ENCODE measurements at regions of chr6 and their contacts with region 1.

Region 1: DNA sequence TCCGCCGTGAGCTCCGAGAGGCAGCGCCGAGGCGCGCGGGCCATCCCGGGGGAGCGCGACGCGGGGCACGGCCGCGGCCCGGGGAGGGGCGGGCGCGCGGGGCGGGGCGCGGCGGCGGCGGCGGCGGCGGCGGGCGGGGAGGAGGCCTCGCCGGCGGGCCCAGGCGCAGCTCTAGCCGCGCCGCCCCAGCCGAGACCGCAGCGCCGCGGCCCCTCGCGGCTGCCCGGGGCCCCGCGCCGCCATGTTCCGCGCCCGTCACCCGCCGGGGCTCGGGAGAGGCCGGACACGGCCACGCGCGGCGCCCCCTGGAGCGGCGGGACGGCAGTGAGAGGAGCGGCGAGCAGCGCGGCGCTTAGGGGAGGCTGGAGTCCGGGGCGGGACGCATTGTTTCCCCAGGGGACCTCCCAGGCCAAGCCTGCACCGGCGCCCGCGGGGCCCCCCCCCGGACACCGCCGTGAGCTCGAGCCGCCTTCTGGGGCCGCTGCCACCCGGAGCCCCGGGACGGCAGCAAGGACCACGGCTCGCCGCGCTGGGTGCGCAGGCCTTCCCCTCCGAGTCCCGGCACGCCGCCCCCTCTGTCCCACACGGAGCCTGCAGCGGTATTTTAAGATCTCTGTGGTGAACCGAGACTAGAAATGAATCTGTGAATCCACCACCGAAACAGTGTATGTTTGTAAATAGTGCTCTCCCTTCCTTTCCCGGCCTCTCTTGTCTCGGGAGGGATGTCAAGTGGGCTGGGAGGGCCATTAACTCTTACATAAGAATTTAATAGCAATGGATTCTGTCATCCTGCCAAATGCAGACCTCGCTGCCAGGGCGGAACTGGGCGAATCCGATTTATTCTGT is at the start of gene KIF13A:
- DNase-seq: peak; percentile 77
- ATAC-seq: peak; percentile 82 to 83
- total RNA-seq, gene KIF13A: 60.5 to 64.7 TPM

Region 2: DNA sequence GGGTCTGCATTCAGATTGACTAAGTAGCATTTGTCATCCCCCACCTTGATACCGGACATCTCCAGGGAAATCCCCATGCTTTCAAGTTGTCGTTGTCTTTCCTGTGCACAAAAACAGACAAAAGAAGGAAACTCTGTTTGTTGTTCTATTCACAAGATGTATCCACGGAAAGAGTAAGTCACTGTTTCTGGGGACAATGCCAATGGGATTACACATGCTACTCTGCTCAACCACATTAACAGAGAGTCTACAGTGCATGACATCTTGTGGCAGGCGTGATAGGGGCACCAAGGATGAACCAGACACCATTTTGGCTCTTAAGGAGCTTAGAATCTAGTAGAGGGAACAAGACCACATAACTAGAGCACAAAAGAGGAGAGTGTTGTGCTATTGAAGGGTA is 156.7 kb before region 1 on chr6:
- intact Hi-C with region 1: loop called in 1 of 2 experiments (anchors 5 kb)
- DNase-seq: no peak
- ATAC-seq: peak; percentile 72 to 90

Region 3: GRCh38 chr6:17865798-17866725 is 121.7 kb before region 1 on chr6:
- intact Hi-C with region 1: loop called in 1 of 2 experiments (anchors 5 kb)
- DNase-seq: peak; percentile 88
- ATAC-seq: peak; percentile 68 to 96

Region 4: GRCh38 chr6:17932330-17932852 is 55.4 kb before region 1 on chr6:
- intact Hi-C with region 1: loop called (anchors 5 kb)
- DNase-seq: peak; percentile 60
- ATAC-seq: peak; percentile 89 to 90

Region 5: DNA sequence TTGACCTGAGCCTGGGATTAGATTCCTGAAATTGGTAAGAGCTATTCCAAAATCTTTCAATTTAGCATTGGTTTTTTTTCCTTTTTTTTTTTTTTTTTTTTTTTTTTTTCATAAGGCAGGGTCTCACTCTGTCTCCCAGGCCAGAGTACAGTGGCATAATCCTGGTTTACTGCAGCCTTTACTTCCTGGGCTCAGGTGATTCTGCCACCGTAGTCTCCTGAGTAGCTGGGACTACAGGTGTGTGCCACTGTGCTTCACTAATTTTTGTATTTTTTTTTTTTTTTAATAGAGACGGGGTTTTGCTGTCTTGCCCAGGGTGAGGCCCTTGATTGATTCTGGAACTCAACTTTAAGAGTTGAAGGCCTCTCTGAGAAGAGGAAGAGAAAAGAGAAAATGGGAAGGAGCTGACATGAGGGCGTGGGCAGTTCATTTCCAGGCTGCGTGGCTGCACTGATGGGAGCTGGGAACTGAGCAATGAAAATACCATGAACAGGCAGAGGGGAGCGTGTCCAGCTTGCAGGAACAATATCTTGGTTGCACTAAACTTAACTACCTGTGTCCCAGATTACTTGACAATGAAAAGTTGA is 192.1 kb after region 1 on chr6:
- intact Hi-C with region 1: no loop called
- DNase-seq: no peak
- ATAC-seq: peak in 1 of 2 donors; percentile 77

Measured in left cardiac atrium (tissue), 4 donors.